Heart right ventricle (tissue), 16 donors: ENCODE measurements at regions of chr1 and their contacts with region 1.

Region 1: GRCh38 chr1:24673336-24673735 is 30.2 kb downstream of the SRRM1 start:
- DNase-seq: no peak
- ATAC-seq: no peak
- H3K4me3 ChIP-seq: no peak overlapping the region
- H3K27ac ChIP-seq: no peak overlapping the region
- H3K4me1 ChIP-seq: no peaks in the 10 kb centered on the region
- H3K27me3 ChIP-seq: no peaks in the 10 kb centered on the region
- CTCF ChIP-seq: no peak

Region 2: GRCh38 chr1:24659993-24660665 is 13.2 kb before region 1 on chr1:
- intact Hi-C with region 1: loop called in 1 of 10 experiments (anchors 1 kb)
- DNase-seq: no peak
- ATAC-seq: no peak
- H3K4me3 ChIP-seq: no peak overlapping the region
- H3K27ac ChIP-seq: no peak overlapping the region
- H3K4me1 ChIP-seq: peaks cover 0 to 5% (median 0%) of the 10 kb centered on the region in 9 donors
- H3K27me3 ChIP-seq: no peaks in the 10 kb centered on the region
- CTCF ChIP-seq: no peak